Caco-2 (cell line): ENCODE measurements at regions of chr12 and their contacts with region 1.

Region 1: DNA sequence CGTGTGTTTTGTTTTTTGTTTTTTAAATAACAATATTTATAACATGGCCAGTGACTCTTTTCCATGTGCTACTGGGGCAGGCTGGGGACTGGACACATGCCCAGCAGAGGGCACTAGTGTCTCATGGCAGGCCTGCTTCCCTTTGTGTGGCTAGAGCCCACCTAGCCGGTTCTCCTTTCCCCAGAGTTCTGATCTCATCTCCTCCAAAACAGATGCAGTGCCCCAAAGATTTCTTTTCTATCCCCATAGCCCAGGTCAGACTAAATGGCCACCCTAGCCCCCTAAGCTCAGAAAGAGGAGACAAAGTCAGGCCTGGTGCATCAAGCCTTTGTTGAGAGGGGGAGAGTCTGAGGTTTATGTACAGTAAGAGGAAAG is 21.2 kb downstream of the PRPF40B start:
- DNase-seq: peak; percentile 79 to 86
- H3K4me3 ChIP-seq: no peak overlapping the region
- H3K4me3 Mint-ChIP-seq: no peak overlapping the region
- H3K27ac Mint-ChIP-seq: no peak overlapping the region
- H3K4me1 ChIP-seq: peaks cover 21% of the 10 kb centered on the region; the same call in 1 of the 2 replicates
- H3K4me1 Mint-ChIP-seq: peaks cover 7% of the 10 kb centered on the region
- H3K27me3 ChIP-seq: no peaks in the 10 kb centered on the region
- H3K27me3 Mint-ChIP-seq: no peaks in the 10 kb centered on the region
- CTCF ChIP-seq: peak; percentile 94 to 97

Region 2: DNA sequence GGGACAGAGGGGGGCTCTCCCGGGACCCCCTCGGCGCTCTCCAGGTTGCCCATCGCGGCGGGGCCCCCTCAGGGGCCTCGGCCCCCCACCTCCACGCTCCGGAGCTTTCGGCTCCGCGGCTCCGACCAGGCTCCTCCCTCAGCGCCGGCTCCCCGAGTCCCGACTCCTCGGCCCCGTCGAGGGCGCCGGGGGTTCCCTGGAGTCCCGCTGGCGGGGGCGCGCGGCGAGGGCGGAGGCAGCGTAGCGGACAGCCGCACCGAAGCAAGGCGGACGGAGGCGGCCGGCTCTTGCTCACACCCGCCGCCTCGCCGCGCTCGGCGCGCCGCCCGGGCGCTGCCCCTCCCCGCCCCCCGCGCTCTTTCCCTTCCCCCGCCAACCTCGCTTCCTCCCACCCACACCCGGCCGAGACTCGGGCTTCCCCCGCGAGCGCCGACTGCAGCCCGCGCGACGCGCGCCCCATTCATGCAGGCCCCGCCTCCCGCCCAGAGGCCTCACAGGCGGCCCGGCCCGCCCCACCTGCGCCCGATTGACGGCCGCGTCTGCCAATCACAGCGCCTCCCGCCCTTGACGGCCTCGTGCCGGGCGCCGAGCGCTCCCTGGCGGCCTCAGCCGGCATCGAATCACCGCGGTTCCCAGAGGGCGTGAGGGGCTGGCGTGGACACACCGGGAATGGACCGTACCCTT is 62.7 kb after region 1 on chr12 and contains the start of gene FMNL3:
- CTCF ChIA-PET with region 1: interaction called, 7 read pairs
- POLR2A ChIA-PET with region 1: interaction called, 6 read pairs
- intact Hi-C with region 1: loop called (anchors 1 kb)
- DNase-seq: peak; percentile 96 to 100
- H3K4me3 ChIP-seq: peak within 1 kb of the TSS; percentile 76
- H3K4me3 Mint-ChIP-seq: peak within 1 kb of the TSS; percentile 83
- H3K27ac Mint-ChIP-seq: peak within 1 kb of the TSS; percentile 3
- H3K4me1 ChIP-seq: peaks cover 5% of the 10 kb centered on the region; the same call in 1 of the 2 replicates
- H3K4me1 Mint-ChIP-seq: peaks cover 6% of the 10 kb centered on the region
- H3K27me3 ChIP-seq: no peaks in the 10 kb centered on the region
- H3K27me3 Mint-ChIP-seq: peaks cover 13% of the 10 kb centered on the region
- CTCF ChIP-seq: peak; percentile 95 to 96
- total RNA-seq, gene FMNL3: 9.2 and 10.7 TPM in 2 replicates

Region 3: DNA sequence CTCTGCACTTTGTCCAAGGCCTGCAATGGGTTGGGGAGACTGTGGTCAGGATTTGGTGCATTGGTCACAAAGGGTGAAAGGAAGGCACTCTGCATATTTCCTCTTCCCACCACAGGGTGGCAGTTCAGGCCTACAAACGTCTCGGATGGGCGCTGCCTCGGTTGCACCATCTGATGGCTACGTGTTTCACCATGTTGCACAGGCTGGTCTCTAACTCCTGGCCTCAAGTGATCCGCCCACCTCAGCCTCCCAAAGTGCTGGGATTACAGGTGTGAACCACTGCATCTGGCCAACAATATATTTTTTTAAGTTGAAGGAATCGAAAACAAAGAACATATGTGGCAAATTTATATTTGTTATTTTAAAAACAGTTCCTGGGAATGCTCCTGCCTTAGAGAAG is 131.8 kb after region 1 on chr12:
- CTCF ChIA-PET with region 1: no interaction called
- POLR2A ChIA-PET with region 1: no interaction called
- intact Hi-C with region 1: loop called (anchors 10 kb)
- DNase-seq: peak; percentile 76 to 84
- H3K4me3 ChIP-seq: no peak overlapping the region
- H3K4me3 Mint-ChIP-seq: no peak overlapping the region
- H3K27ac Mint-ChIP-seq: peak overlapping the region; percentile 37
- H3K4me1 ChIP-seq: no peaks in the 10 kb centered on the region
- H3K4me1 Mint-ChIP-seq: peaks cover 10% of the 10 kb centered on the region
- H3K27me3 ChIP-seq: no peaks in the 10 kb centered on the region
- H3K27me3 Mint-ChIP-seq: peaks cover 8% of the 10 kb centered on the region
- CTCF ChIP-seq: peak; percentile 86 to 93

Region 4: GRCh38 chr12:49842519-49843352 is 198.1 kb after region 1 on chr12 and contains the start of gene BCDIN3D:
- CTCF ChIA-PET with region 1: interaction called, 5 read pairs
- POLR2A ChIA-PET with region 1: no interaction called
- intact Hi-C with region 1: loop called (anchors 1 kb)
- DNase-seq: peak; percentile 94
- H3K4me3 ChIP-seq: peak within 1 kb of the TSS; percentile 59
- H3K4me3 Mint-ChIP-seq: peak within 1 kb of the TSS; percentile 93
- H3K27ac Mint-ChIP-seq: peak within 1 kb of the TSS; percentile 92
- H3K4me1 ChIP-seq: peaks cover 7% of the 10 kb centered on the region; the same call in 1 of the 2 replicates
- H3K4me1 Mint-ChIP-seq: peaks cover 24% of the 10 kb centered on the region
- H3K27me3 ChIP-seq: no peaks in the 10 kb centered on the region
- H3K27me3 Mint-ChIP-seq: no peaks in the 10 kb centered on the region
- CTCF ChIP-seq: no peak
- total RNA-seq, gene BCDIN3D: 5.7 and 6.6 TPM in 2 replicates